ENCODE measurements at regions of chr1 and their contacts with region 1.

Region 1: GRCh38 chr1:99180343-99180808 is 83.9 kb upstream of the PLPPR4 start:
- DNase-seq: peak; percentile 84
- ATAC-seq: peak; percentile 91

Region 2: DNA sequence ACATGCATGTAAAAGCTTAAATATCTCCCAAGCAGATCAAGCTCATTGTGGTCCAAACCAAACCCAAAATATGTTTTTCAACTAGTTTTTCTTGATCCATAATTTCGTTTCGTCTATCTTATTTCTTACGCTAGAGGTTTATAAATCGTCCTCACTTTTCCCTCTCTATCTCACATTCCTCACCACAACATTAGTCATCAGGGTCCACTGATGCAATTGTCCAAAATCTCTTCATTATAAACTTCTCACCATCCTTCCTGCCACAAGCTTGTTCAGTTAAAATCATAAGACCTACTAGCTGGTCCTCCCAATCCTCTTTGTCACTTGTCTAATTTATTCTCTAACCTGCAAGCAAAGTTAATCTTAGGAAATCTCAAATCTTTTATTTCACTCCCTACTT is 292.5 kb after region 1 on chr1:
- intact Hi-C with region 1: loop called (anchors 10 kb)
- DNase-seq: no peak
- ATAC-seq: no peak

Region 3: GRCh38 chr1:99707535-99708142 is 527.3 kb after region 1 on chr1:
- intact Hi-C with region 1: loop called (anchors 5 kb)
- DNase-seq: peak; percentile 88
- ATAC-seq: peak; percentile 81

Region 4: GRCh38 chr1:100455478-100456072 is 1275.2 kb after region 1 on chr1:
- intact Hi-C with region 1: no loop called
- DNase-seq: no peak
- ATAC-seq: no peak

Measured in sciatic nerve (tissue), 2 donors.